ENCODE measurements at regions of chr2 and their contacts with region 1.

Region 1: DNA sequence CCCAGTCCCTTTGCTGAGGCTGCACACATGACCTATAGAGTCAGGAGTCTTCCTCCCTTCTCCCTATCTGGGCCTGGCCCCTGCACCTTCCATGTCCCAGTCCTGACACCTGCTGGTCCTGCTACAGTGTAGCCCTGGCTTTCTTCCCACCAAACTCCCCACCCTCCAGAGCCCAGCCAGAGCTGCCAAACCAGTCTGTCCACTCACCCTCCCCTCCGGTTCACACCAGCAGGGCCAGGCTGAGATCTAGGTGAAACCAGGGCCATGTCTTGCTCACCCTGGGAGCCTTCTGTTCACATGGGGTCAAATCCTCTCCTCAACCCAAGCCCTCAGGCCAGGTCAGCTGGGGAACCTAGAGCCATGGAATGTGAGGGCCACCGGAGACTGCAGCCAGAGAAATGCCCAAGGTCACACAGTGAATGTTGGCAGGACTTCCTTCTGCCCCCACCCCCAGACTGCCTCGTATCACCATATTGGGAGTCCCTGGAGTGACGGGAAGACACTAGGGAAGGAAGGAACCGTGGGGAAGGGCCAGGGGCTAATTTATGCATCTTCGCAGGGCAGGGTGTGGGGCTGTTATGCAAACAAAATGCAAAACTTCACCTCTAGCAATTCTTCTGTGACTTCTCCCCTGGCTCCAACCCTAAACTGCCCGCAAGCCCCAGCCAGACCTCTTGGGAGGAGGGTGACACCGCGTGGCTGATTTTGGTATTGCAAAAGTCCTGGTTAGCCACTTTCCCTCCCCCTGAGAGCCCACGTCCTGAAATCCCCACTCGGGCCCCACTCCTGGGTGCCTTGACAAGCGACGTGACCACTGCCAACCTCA is 14.6 kb downstream of the TNS1 start:
- DNase-seq: peak; percentile 83
- H3K4me3 ChIP-seq: no peak overlapping the region; a peak in 1 of 4 replicates
- H3K27ac ChIP-seq: peak overlapping the region in 1 of 2 experiments; percentile 36; a peak in 2 of 4 replicates
- H3K4me1 ChIP-seq: peaks cover 8 to 14% of the 10 kb centered on the region in 2 experiments; a peak in 3 of 4 replicates
- H3K27me3 ChIP-seq: no peaks in the 10 kb centered on the region
- CTCF ChIP-seq: peak; percentile 86
- EP300 ChIP-seq: 0 out of 4 replicates have a peak, but pooled peaks of 1 of the 2 experiments have one; percentile 6
- RAD21 ChIP-seq: peak; percentile 96

Region 2: DNA sequence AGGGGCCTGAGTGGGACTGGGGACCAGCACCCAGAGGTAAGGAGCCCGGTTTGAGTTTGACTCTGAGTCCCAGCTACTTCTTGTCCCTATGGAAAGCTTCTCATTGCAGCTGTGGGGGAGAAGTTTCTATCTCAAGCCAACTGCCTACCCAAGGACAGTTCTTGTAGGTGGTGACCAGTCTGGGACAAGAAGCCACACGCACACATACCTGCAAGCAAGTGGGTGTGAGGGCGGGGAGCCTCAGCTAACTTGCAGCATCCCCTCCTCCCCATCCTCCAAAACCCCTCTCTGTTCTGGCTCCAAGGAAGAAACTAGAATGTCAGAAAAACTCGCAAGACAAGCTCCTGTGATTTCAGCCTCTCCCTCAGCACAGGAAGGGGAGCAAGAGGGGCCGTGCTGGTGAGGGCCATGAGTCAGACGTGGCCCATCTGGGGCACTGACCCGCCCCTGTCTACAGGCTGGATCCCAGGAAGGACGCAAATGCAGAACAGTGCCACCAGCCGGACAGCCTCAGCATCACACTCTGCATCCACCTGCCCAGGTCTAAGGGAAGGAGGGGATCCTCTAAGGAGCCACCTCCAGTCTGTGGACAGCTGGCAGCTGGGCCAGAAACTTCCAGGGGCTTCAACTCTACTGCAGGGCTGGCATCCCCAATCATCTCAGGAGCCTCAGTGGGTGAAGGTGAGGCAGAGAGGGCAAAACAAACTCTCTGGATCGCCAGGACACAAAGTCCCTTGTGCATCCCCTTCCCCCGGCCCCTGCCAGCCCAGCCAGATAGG is 88.8 kb before region 1 on chr2:
- CTCF ChIA-PET with region 1: interaction called, 10 read pairs
- POLR2A ChIA-PET with region 1: no interaction called
- DNase-seq: peak; percentile 76
- H3K4me3 ChIP-seq: no peak overlapping the region; a peak in 1 of 4 replicates
- H3K27ac ChIP-seq: peak overlapping the region in 1 of 2 experiments; percentile 52; a peak in 3 of 4 replicates
- H3K4me1 ChIP-seq: peaks cover 12 to 45% of the 10 kb centered on the region in 2 experiments; a peak in 2 of 4 replicates
- H3K27me3 ChIP-seq: no peaks in the 10 kb centered on the region
- CTCF ChIP-seq: peak; percentile 87
- EP300 ChIP-seq: no peak
- RAD21 ChIP-seq: peak; percentile 47

Region 3: DNA sequence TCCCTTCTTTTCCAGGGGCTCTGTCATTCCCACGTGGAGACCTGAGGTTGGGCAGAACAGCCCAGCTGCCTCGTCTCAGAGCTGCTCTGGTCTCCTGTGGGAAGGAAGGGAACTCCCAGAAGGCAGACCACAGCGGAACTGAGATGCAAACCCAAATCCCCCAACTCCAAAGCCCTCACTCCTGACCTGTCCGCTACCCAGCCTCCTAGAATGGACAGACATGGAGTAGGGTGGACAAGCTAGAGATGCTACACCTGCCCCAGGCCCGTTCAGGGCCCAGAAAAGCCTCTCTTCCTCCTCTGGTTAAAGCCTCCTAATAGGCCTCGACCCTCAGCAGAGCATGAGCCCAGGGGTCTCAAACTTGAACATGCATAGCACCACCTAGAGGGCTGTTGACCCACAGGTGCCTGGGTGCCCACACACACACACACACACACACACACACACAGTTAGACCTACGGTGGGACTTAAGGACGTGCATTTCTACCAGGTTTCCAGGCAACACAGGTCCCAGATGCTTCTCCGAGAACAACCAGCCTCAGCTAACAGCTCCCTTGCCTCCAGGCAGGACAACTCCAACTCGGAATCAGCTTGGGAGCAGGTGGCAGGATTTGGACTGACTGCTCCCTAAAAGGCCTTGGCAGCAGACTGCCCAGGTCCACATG is 78.9 kb before region 1 on chr2:
- CTCF ChIA-PET with region 1: interaction called, 13 read pairs
- POLR2A ChIA-PET with region 1: no interaction called
- DNase-seq: peak; percentile 61
- H3K4me3 ChIP-seq: no peak overlapping the region
- H3K27ac ChIP-seq: peak overlapping the region in 1 of 2 experiments; percentile 76; a peak in 2 of 4 replicates
- H3K4me1 ChIP-seq: peaks cover 19 to 78% of the 10 kb centered on the region in 2 experiments; a peak in 2 of 4 replicates
- H3K27me3 ChIP-seq: no peaks in the 10 kb centered on the region
- CTCF ChIP-seq: peak; percentile 16
- EP300 ChIP-seq: no peak
- RAD21 ChIP-seq: peak; percentile 16; the same call in 1 of the 2 replicates

Region 4: GRCh38 chr2:217934321-217935131 is 53.7 kb before region 1 on chr2:
- CTCF ChIA-PET with region 1: interaction called, 129 read pairs
- POLR2A ChIA-PET with region 1: interaction called, 4 read pairs
- DNase-seq: no peak
- H3K4me3 ChIP-seq: 0 out of 4 replicates have a peak overlapping the region, but pooled peaks of 1 of the 2 experiments have one; percentile 15
- H3K27ac ChIP-seq: peak overlapping the region; percentile 86 to 96
- H3K4me1 ChIP-seq: peaks cover 75 to 94% of the 10 kb centered on the region in 2 experiments
- H3K27me3 ChIP-seq: no peaks in the 10 kb centered on the region
- CTCF ChIP-seq: no peak
- EP300 ChIP-seq: peak in 1 of 2 experiments; percentile 80; a peak in 1 of 4 replicates
- RAD21 ChIP-seq: no peak

Region 5: DNA sequence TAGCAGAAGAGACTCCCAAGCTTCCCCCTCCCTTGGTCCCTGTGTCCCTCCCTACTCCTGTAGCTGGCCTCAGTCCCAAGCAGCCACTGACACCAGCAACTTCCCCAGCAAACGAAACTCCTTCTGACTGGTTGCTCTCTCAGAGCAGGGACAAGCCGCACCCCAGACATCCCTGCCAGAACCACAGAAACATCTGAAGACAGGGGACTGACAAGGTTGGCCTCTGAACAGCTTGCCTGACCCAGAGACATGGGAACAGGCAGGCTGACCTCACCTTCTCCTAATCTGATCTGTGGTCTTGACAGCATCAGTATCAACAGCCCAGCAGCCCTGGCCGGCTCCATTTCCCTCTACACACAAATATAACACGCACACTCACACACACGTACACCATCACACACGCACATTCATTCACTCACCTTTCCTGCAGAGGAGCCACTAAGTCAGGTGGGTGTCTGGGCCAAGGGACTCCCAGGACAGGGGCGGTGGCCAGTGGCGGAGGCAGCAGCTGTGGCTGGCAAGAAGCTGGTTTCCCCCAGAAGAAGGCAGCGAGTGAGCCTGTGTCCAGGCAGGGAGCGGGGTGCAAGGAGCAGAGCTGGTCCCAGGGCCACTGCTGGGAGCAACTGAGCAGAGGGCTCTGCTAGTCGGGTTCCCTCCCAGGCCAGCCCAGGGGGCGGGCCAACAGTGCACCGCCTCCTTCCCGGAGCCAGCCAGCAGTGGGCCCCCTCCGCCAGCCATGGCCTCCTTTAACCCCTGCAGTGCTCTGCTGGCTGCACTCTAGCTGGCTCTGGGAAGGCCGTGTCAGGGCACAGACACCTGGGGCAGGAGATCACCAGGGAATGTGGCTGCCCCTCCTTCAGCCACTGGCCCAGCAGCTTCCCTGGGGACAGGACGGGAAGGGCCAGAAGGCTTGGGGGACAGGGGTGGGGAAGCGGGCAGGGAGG is 44.5 kb before region 1 on chr2:
- CTCF ChIA-PET with region 1: interaction called, 129 read pairs
- POLR2A ChIA-PET with region 1: no interaction called
- DNase-seq: peak; percentile 96
- H3K4me3 ChIP-seq: peak overlapping the region; percentile 38 to 70
- H3K27ac ChIP-seq: peak overlapping the region; percentile 60 to 86; a peak in 3 of 4 replicates
- H3K4me1 ChIP-seq: peaks cover 7 to 94% of the 10 kb centered on the region in 2 experiments
- H3K27me3 ChIP-seq: no peaks in the 10 kb centered on the region
- CTCF ChIP-seq: peak; percentile 29
- EP300 ChIP-seq: no peak
- RAD21 ChIP-seq: peak; percentile 53

Region 6: DNA sequence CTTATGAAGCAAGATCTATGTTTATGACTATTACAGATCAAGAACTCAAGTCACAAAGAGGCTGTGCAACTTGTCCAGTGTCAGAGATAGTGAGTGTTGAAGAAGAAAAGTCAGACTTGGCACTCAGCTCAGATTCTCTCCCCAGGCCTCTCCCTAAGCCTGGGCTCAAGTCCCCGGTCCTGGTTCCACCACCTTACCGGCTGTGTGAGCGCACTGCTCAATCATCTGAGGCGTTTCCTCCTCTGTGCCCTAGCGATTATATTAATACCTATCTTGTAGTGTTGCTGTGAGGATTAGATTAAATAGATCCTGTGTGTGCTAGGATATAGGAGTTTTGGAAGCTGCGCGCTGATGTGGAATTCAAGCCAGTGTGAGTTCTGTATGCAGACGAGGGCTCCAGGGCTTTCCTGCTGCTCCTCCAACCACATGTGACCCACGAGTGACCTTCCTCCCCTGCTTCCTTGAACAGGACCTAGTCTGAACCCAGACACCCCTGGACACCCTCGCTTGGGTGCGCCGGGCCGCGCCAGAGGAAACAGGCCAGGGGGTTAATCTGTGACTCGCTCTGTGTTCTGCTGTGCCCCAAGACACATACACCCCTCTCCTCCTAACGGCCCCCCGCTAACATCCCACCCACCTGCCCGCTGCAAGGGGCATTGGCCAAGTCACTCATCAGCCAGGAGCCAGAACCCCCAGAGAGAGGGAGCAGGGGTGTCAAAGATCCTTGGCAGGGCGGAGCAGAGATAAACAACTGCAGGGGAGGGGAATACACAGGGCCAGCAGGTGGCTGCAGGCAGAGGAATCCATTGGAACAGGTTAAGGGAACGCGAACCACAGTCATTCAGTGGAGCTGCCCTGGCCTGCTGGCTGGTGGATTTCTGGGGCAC is 23.7 kb before region 1 on chr2:
- CTCF ChIA-PET with region 1: interaction called, 10 read pairs
- POLR2A ChIA-PET with region 1: no interaction called
- DNase-seq: peak; percentile 51
- H3K4me3 ChIP-seq: no peak overlapping the region
- H3K27ac ChIP-seq: peak overlapping the region in 1 of 2 experiments; percentile 11; a peak in 1 of 4 replicates
- H3K4me1 ChIP-seq: peaks cover 12 to 36% of the 10 kb centered on the region in 2 experiments; a peak in 2 of 4 replicates
- H3K27me3 ChIP-seq: no peaks in the 10 kb centered on the region
- CTCF ChIP-seq: no peak
- EP300 ChIP-seq: no peak
- RAD21 ChIP-seq: no peak

Region 7: DNA sequence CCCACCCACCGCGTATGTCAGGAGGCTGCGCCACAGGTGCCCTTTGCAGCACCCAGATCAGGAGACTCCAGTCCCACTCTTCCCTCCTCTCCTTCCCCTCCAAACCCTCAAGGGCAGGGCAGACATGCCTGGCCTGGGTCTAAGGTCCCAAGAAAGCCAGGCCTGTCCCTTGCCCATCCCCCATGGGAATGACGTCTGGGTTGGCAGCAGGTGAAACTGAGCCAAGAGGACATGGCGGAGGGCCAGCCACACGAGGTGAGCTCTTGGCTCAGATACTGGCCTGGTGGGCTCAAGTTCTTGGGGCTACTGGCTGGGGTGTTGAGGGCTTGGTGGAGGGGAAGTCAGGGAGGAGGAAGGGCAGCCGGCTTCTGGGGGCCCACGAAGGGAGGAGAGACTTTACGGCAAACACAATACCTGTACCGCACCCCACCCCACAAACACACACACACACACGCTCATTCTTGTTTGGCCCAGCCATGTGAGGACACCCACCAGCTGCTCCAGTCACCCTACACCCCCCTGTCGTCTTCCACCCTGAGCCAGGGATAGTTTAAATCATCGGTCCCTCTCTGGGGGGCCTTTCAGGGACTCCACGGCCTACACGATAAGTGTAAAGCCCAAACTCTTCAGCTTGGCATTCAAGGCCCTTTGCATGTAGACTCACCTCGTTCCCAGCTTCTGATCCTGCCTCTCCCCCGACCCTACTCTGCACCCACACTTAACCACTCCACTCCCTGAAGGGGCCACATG is 38.6 kb after region 1 on chr2:
- CTCF ChIA-PET with region 1: interaction called, 54 read pairs
- POLR2A ChIA-PET with region 1: no interaction called
- DNase-seq: peak; percentile 8
- H3K4me3 ChIP-seq: no peak overlapping the region
- H3K27ac ChIP-seq: no peak overlapping the region
- H3K4me1 ChIP-seq: peaks cover 0 to 18% of the 10 kb centered on the region in 2 experiments; a peak in 1 of 4 replicates
- H3K27me3 ChIP-seq: no peaks in the 10 kb centered on the region
- CTCF ChIP-seq: no peak
- EP300 ChIP-seq: no peak
- RAD21 ChIP-seq: no peak

Region 8: GRCh38 chr2:218168635-218169462 is 180.6 kb after region 1 on chr2:
- CTCF ChIA-PET with region 1: no interaction called
- POLR2A ChIA-PET with region 1: no interaction called
- DNase-seq: peak; percentile 54
- H3K4me3 ChIP-seq: no peak overlapping the region
- H3K27ac ChIP-seq: no peak overlapping the region
- H3K4me1 ChIP-seq: no peaks in the 10 kb centered on the region
- H3K27me3 ChIP-seq: peaks cover 19% of the 10 kb centered on the region; the same call in 1 of the 2 replicates
- CTCF ChIP-seq: peak; percentile 71
- EP300 ChIP-seq: no peak
- RAD21 ChIP-seq: peak; percentile 36; the same call in 1 of the 2 replicates